Spleen (tissue), 13 donors: ENCODE measurements at regions of chr2 and their contacts with region 1.

Region 1: GRCh38 chr2:181715033-181715630 is 34.8 kb upstream of the NEUROD1 start:
- DNase-seq: no peak
- H3K4me3 ChIP-seq: no peak overlapping the region
- H3K27ac ChIP-seq: no peak overlapping the region
- H3K4me1 ChIP-seq: no peaks in the 10 kb centered on the region
- H3K27me3 ChIP-seq: no peaks in the 10 kb centered on the region
- CTCF ChIP-seq: peak; percentile 44 to 78 (median 66)
- POLR2A ChIP-seq: no peak

Region 2: GRCh38 chr2:180125245-180125962 is 1589.7 kb before region 1 on chr2:
- intact Hi-C with region 1: loop called (anchors 10 kb)
- DNase-seq: no peak
- H3K4me3 ChIP-seq: no peak overlapping the region
- H3K27ac ChIP-seq: no peak overlapping the region
- H3K4me1 ChIP-seq: peaks cover 0 to 3% (median 0%) of the 10 kb centered on the region in 6 donors
- H3K27me3 ChIP-seq: peaks cover 0 to 7% (median 0%) of the 10 kb centered on the region in 7 donors
- CTCF ChIP-seq: peak in 5 of 11 experiments; percentile 28 to 42 (median 37)
- POLR2A ChIP-seq: no peak

Region 3: DNA sequence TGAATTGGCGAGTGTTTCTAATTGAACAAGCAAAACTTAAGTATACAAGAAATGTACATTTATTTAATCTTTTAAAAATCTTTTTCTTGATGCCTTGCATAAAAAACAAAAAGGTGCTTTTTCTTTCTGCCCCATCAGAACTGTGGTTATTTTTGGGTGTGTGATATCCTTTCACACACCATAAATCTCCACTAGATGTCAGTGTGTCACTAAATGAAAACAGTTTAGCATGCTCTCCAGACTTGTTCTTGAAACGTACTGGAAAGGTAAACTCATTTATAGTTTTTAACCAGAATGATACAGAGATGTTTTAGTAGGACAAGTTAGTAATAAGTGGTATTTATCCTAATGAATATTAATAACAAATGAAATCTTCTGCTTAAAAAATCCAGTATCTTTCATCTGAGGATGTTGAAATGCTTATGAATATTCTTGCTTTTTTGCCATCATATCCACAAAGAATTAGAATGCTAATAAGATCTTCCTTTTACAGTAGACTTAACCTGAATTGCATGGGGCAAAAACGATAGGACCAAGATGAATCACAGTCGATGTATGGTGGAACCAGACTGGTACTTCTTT is 637.9 kb before region 1 on chr2:
- intact Hi-C with region 1: loop called (anchors 10 kb)
- DNase-seq: no peak
- H3K4me3 ChIP-seq: no peak overlapping the region
- H3K27ac ChIP-seq: no peak overlapping the region
- H3K4me1 ChIP-seq: peaks cover 0 to 13% (median 0%) of the 10 kb centered on the region in 6 donors
- H3K27me3 ChIP-seq: no peaks in the 10 kb centered on the region
- CTCF ChIP-seq: peak; percentile 33 to 75 (median 65)
- POLR2A ChIP-seq: no peak

Region 4: DNA sequence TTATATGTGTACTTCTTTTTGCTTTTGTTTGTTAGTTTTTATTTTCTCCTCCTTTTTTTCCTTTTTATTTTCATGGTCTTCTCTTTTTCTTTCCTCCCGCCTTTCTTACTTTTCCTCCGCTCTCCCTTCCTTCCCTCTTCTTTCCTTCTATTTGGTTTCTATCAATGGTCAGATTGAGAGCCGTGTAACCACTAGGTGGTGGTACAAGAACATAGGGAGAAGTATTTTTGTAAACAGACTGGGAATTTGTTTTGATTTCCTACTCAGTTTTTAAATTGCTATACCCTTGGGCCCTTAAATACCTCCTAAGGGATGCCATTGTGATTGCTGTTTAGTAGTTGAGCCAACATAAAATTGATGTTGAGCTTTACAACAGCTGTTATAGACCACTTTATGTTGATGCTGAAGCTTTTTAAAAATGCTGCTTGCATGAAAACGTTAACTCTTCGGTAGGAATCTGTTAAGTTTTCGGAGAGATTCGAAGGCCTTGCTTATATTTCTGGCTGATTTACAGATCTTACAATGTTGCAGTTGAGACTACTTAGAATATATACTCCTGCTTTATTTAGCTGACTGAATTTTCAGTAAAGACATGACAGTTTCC is 610.5 kb before region 1 on chr2:
- intact Hi-C with region 1: loop called (anchors 10 kb)
- DNase-seq: no peak
- H3K4me3 ChIP-seq: no peak overlapping the region
- H3K27ac ChIP-seq: no peak overlapping the region
- H3K4me1 ChIP-seq: peaks cover 0 to 33% (median 12%) of the 10 kb centered on the region in 6 donors
- H3K27me3 ChIP-seq: no peaks in the 10 kb centered on the region
- CTCF ChIP-seq: peak; percentile 33 to 71 (median 61)
- POLR2A ChIP-seq: no peak

Region 5: GRCh38 chr2:181836583-181836982 is 121.5 kb after region 1 on chr2:
- intact Hi-C with region 1: no loop called
- DNase-seq: no peak
- H3K4me3 ChIP-seq: no peak overlapping the region
- H3K27ac ChIP-seq: no peak overlapping the region
- H3K4me1 ChIP-seq: no peaks in the 10 kb centered on the region
- H3K27me3 ChIP-seq: no peaks in the 10 kb centered on the region
- CTCF ChIP-seq: no peak
- POLR2A ChIP-seq: no peak